ENCODE measurements at regions of chr2 and their contacts with region 1.

Region 1: GRCh38 chr2:53636596-53636995 is 131.0 kb upstream of the CHAC2 start:
- DNase-seq: no peak
- H3K4me3 ChIP-seq: no peak overlapping the region
- H3K27ac ChIP-seq: no peak overlapping the region
- H3K4me1 ChIP-seq: no peaks in the 10 kb centered on the region
- H3K27me3 ChIP-seq: no peaks in the 10 kb centered on the region
- CTCF ChIP-seq: no peak

Region 2: DNA sequence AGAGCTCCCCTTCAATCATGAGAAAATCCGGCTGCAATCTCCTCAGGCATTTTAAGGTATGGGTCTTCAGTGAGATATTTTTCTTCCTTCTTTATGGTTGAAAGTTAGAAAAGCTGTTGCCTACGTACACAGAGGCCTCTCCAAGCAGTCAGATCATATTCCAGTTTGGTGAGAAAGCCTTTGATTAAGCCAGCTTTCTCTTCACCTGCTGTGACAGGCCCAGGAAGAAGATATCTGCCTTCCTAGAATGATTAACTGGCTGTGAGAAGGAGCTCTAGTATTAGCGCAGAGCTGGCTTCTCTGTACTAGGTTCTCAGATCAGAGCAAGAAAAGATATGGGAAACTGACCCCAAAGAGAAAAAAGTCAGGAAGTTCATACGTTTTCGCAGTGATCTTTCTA is 454.0 kb before region 1 on chr2:
- CTCF ChIA-PET with region 1: interaction called, 15 read pairs
- POLR2A ChIA-PET with region 1: no interaction called
- intact Hi-C with region 1: no loop called
- DNase-seq: no peak
- H3K4me3 ChIP-seq: no peak overlapping the region
- H3K27ac ChIP-seq: no peak overlapping the region
- H3K4me1 ChIP-seq: no peaks in the 10 kb centered on the region
- H3K27me3 ChIP-seq: no peaks in the 10 kb centered on the region
- CTCF ChIP-seq: no peak

Region 3: GRCh38 chr2:53486185-53486584 is 150.4 kb before region 1 on chr2:
- CTCF ChIA-PET with region 1: no interaction called
- POLR2A ChIA-PET with region 1: no interaction called
- intact Hi-C with region 1: no loop called
- DNase-seq: no peak
- H3K4me3 ChIP-seq: no peak overlapping the region
- H3K27ac ChIP-seq: no peak overlapping the region
- H3K4me1 ChIP-seq: 0 out of 2 replicates have a peak, but pooled peaks cover 5% of the 10 kb centered on the region
- H3K27me3 ChIP-seq: no peaks in the 10 kb centered on the region
- CTCF ChIP-seq: no peak

Measured in PC-9 (cell line).